A549 (cell line): ENCODE measurements at regions of chr12 and their contacts with region 1.

Region 1: GRCh38 chr12:40622246-40622838 is 69.9 kb upstream of the CNTN1 start:
- DNase-seq: peak; percentile 35 to 86
- ATAC-seq: peak; percentile 70 to 92; a peak in 4 of 6 replicates
- H3K4me3 ChIP-seq: no peak overlapping the region
- H3K27ac ChIP-seq: peak overlapping the region; percentile 23 to 79; a peak in 4 of 6 replicates
- H3K4me1 ChIP-seq: peaks cover 19% of the 10 kb centered on the region
- CTCF ChIP-seq: peak; percentile 94
- EP300 ChIP-seq: no peak
- POLR2A ChIP-seq: no peak
- RAD21 ChIP-seq: peak; percentile 93 to 98

Region 2: GRCh38 chr12:40691913-40692764 is 69.8 kb after region 1 on chr12 and contains the start of gene CNTN1:
- CTCF ChIA-PET with region 1: no interaction called
- POLR2A ChIA-PET with region 1: no interaction called
- DNase-seq: peak; percentile 93 to 99
- ATAC-seq: peak; percentile 90 to 97
- H3K4me3 ChIP-seq: peak within 1 kb of the TSS; percentile 91
- H3K27ac ChIP-seq: peak within 1 kb of the TSS; percentile 75 to 93
- H3K4me1 ChIP-seq: peaks cover 57% of the 10 kb centered on the region
- CTCF ChIP-seq: no peak
- EP300 ChIP-seq: no peak
- POLR2A ChIP-seq: peak; percentile 20; the same call in 1 of the 2 replicates
- RAD21 ChIP-seq: no peak
- polyA plus RNA-seq, gene CNTN1: 175 and 186 TPM in 2 replicates

Region 3: GRCh38 chr12:40921563-40922163 is 299.3 kb after region 1 on chr12:
- CTCF ChIA-PET with region 1: interaction called, 15 read pairs
- POLR2A ChIA-PET with region 1: no interaction called
- DNase-seq: peak in 1 of 2 experiments; percentile 34
- ATAC-seq: peak in 1 of 2 experiments; percentile 29; a peak in 1 of 6 replicates
- H3K4me3 ChIP-seq: no peak overlapping the region
- H3K27ac ChIP-seq: no peak overlapping the region
- H3K4me1 ChIP-seq: peaks cover 8% of the 10 kb centered on the region; the same call in 2 of the 3 replicates
- CTCF ChIP-seq: peak; percentile 76
- EP300 ChIP-seq: no peak
- POLR2A ChIP-seq: no peak
- RAD21 ChIP-seq: peak; percentile 84 to 87